ENCODE measurements at regions of chr1 and their contacts with region 1.

Region 1: DNA sequence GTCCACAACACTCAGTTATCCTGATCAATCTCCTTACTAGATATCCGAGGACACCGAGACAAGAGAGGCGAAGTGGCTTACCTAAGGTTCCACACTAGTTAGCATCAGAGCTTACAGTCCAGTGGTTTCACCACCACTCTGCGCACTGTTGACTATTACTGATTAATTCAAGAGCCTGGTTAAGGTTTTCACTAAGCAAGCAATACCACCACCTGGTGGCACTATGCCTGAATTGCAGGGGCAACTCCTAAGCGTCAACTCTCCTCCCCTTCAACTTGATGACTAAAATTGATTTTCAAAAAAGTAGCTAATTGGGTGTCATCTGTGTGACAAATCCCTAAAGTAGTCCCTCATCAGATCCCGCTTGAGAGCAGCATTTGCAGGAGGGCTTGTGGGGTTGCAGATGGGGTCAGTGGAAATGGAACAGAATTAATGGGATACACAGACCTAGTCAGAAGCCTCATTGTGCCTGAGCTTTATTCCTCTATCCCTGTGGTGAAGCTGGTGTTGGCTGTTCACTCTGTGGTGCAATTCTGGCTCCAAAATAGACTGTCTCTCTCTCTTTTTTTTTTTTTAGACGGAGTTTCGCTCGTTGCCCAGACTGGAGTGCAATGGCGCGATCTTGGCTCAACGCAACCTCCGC is 9.1 kb downstream of the TTC22 start:
- DNase-seq: peak; percentile 65
- ATAC-seq: peak; percentile 55
- H3K4me3 ChIP-seq: no peak overlapping the region
- H3K27ac ChIP-seq: no peak overlapping the region
- H3K4me1 ChIP-seq: peaks cover 44% of the 10 kb centered on the region
- H3K27me3 ChIP-seq: peaks cover 0 to 7% of the 10 kb centered on the region in 2 experiments; a peak in 1 of 5 replicates
- CTCF ChIP-seq: peak; percentile 83
- EP300 ChIP-seq: no peak
- POLR2A ChIP-seq: no peak
- RAD21 ChIP-seq: peak; percentile 66; the same call in 1 of the 2 replicates

Region 2: DNA sequence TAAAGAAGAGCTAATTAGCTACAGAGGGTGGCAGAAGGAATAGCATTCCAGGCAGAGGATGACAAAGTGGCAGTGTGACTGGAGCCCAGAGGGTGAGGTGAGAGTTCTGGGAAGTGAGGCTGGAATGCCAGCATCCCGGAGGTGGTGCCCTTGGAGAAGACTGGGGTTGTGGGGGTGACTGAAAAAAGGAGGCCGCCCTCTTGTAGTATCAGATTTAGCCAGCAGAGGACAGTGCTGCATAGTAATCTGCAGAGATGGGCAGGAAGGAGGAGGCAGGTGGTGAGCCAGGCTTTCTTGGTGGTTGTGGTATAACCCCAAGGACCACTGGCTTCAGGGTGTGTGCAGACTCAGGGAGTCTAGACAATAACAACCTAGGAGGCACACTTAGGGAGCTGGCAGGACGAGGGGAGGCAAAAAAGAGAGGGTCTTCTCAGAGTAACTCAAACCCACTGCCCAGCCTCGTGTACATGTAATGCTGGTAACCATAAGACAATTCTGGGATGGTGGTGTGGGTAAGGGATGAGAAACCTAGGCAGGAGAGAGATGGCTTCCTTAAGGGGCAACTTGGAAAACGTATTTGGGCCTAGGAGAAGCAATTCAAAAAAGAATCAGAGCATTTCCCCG is 119.9 kb before region 1 on chr1:
- CTCF ChIA-PET with region 1: interaction called, 13 read pairs
- POLR2A ChIA-PET with region 1: no interaction called
- in situ Hi-C with region 1: no loop called
- intact Hi-C with region 1: loop called (anchors 1 kb)
- DNase-seq: peak; percentile 44
- ATAC-seq: peak; percentile 90
- H3K4me3 ChIP-seq: no peak overlapping the region
- H3K27ac ChIP-seq: no peak overlapping the region
- H3K4me1 ChIP-seq: no peaks in the 10 kb centered on the region
- H3K27me3 ChIP-seq: no peaks in the 10 kb centered on the region; a peak in 1 of 5 replicates
- CTCF ChIP-seq: peak; percentile 89
- EP300 ChIP-seq: no peak
- POLR2A ChIP-seq: no peak
- RAD21 ChIP-seq: peak; percentile 85

Region 3: DNA sequence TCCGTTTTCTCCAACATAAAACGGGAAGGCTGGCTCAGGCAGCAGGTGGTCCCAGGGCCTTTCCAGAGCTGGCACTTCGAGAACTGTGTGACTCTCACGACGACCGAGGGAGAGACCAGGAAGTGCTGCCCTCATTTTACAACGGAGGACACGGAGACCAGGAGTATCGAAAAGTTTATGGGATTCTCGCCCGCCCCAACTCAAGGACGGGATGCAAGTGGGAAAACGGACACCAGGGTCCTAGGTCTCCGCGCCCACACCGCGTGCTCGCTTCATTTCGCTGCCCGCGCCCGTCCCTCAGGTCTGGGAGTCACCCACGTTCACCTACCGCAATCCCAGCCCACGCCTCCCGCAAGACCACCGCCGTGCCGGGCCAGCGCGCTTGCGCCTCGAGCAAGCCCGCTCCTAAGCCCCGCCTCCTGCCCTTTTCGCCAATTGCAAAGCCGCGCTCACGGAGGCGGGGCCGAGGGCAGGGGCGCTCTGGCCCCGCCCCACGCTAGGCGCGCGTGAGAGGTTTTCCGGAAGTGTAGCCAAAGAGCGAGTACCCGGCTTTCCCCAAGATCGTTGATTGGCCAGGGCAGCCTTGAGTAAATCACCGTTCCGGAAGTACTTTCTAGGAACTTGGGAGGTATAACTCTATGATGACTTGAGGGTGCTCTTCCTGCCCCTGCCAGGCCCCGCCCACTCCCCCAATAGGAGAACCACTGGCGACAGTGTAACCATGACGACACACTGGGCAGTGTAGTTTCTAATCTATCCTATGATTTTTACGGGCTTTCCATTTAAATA is 27.7 kb before region 1 on chr1 and contains the start of gene PARS2:
- CTCF ChIA-PET with region 1: interaction called, 3 read pairs
- POLR2A ChIA-PET with region 1: no interaction called
- in situ Hi-C with region 1: no loop called
- intact Hi-C with region 1: loop called (anchors 2 kb)
- DNase-seq: peak; percentile 99
- ATAC-seq: peak; percentile 94
- H3K4me3 ChIP-seq: peak within 1 kb of the TSS; percentile 77 to 94 (median 88)
- H3K27ac ChIP-seq: peak within 1 kb of the TSS; percentile 84
- H3K4me1 ChIP-seq: peaks cover 24% of the 10 kb centered on the region
- H3K27me3 ChIP-seq: no peaks in the 10 kb centered on the region
- CTCF ChIP-seq: no peak
- EP300 ChIP-seq: 0 out of 4 replicates have a peak, but pooled peaks of 1 of the 2 experiments have one; percentile 20
- POLR2A ChIP-seq: peak; percentile 92 to 96
- RAD21 ChIP-seq: no peak
- total RNA-seq, gene PARS2: 4.6 and 5.5 TPM in 2 replicates

Measured in HepG2 (cell line).